ENCODE measurements at regions of chr10 and their contacts with region 1.

Region 1: DNA sequence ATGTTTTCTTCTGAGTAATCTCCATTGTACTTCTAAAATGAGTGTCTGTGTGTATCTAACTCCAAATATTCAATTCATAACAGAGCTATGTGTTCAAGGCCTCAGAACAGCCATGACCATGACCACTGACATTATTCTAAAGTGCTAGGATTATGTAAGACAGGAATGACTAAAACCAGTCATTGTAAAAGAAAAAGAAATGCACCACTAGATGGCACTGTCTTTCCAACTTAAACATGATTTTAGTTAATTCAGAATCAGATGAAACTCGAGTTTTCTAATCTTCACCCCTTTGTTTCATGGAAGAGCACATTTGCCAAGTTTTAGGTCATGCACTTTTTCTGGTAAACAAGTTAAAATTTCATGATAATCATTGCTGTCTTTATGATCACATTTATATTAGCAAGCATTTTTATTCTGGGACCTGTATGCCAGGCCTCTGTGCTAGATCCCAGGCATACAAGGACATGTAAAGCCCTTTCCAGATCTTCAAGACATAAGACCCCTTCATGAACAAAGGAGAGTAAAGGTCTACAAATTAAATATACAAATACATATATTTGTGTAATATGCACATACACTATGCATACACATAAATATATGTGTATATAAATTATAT is 26.1 kb upstream of the RSU1 start:
- DNase-seq: no peak

Region 2: GRCh38 chr10:17257466-17258321 is 414.3 kb after region 1 on chr10:
- intact Hi-C with region 1: loop called (anchors 5 kb)
- DNase-seq: no peak